Sciatic nerve (tissue), 2 donors: ENCODE measurements at regions of chr5 and their contacts with region 1.

Region 1: GRCh38 chr5:149960272-149961185 is at the start of gene SLC26A2:
- DNase-seq: peak; percentile 98
- ATAC-seq: peak; percentile 100
- total RNA-seq, gene SLC26A2: 15.8 TPM

Region 2: DNA sequence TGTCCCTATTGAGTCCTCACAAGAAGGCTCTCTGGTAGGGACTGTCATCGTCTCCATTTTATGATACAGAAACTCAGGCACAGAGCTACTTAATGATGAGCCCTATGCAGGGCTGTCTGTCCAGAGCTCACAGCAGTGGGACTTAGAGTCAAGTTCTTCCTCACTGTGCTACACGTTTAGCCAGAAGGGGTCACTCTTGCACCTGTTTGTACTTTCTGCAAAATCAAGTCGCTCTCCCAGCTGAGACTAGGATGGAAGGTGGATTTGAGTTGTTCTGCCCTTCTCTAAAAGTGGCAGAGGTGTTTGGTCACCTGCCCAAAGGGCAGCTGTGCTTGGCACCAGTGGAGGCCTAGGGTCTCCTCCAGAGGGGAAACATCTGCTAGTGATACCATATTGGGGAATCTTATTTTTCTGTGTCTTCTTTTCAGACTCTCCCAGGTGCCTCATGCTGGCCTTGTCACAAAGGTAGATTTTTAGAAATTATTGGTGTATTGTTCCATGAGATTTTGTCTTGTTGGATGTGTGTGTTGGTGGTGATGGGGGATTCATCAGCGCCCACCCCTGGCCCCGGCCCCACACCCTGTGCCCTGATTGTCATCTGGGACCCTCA is 126.2 kb before region 1 on chr5:
- intact Hi-C with region 1: loop called (anchors 10 kb)
- DNase-seq: peak; percentile 69
- ATAC-seq: peak; percentile 53

Region 3: DNA sequence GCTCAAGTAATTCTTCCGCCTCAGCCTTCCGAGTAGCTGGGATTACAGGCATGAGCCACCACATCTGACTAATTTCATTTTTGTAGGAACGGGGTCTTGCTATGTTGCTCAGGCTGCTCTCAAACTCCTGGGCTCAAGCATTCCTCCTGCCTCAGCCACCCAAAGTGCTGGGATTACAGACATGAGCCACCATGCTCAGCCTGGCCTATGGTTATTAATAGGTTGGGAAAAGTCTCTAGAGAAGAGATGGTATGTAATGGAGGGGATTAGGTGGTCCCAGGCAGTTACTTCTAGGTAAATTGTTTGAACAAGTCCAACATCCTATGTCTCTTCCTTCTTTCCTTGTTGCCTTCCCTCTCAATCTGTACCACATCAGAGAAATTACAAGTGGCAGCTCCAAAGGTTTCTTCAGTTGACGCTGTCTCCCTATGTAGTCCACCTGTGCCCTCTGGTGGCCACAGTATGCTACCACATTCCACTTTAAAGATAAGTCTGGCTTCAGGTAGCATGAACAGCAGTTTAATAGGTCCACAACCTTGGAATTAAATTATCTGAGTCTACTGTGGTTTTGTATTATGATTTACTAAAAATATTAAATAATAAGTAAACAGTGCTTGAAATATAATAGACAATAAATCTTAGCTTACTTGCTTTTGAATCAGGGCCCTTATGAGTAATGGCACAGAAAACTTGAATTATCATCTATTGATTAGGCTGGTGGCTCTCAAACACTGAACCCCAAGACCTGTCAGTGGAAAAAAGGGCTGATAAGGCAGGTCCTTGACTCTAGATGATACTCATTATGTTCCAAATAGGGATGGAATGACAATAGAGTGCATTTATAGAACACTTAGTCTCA is 30.2 kb after region 1 on chr5:
- intact Hi-C with region 1: loop called (anchors 1 kb)
- DNase-seq: peak; percentile 81
- ATAC-seq: peak; percentile 81